Right ventricle myocardium inferior (tissue), 1 donor: ENCODE measurements at regions of chr17 and their contacts with region 1.

Region 1: DNA sequence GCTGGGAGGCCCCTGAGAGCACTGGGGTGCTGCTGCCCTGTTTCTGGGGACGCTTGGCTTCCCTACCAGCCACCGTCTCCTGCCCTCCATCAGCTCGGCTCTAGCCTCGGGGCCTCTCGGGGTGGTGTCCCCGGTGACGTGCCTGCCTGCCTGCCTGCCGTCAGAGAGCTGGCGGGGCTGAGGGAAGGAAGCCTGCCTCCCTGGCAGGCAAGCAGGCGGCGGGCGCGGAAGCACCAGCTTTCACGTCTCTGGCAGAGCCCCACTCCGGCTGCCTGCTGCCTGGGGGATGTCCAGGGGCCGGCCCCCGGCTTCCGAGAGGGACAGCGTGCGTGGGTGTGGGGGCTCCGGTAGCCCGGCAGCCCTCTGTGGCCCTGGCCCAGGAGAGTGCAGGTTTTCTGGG is 9.3 kb downstream of the CENPX start:
- DNase-seq: no peak
- ATAC-seq: peak; percentile 50

Region 2: GRCh38 chr17:81860756-81861518 is 152.4 kb before region 1 on chr17:
- intact Hi-C with region 1: no loop called
- DNase-seq: peak; percentile 99
- ATAC-seq: peak; percentile 97

Region 3: DNA sequence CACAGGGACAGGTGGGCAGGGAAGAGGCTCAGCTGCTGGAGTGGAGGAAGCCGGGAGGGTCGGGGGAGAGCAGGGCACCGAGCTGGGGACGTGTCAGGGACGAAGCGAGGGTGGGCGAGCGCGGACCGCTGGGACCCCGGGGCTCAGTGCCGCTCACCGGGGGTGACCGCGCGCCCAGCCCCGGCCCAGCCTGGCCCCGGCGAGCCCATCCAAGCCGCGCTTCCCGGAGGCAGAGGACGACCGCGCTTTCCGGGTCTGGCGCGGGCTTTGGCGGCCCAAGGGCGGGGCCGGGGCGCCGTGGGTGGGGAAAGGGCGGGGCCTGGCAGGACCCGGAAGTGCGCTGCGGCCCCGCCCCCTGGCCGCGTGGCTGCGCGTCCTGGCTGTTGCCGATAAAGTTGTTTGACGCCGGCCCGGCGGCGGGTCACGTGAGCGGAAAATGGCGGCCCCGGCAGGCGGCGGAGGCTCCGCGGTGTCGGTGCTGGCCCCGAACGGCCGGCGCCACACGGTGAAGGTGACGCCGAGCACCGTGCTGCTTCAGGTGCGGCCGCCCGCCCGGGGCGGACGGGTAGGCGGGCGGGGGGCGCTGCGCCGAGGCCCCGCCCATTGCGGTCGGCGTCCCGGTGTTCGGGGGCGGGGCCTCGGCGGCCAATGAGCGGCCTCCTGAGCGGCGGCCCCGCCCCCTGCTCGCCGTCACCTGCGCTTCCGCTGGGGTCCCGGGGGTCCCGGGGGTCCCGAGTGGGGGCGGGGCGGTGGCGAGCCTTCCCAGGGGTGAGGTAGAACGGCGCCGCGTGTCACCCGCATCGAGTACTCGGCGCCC is 35.9 kb before region 1 on chr17 and contains the start of gene ASPSCR1:
- intact Hi-C with region 1: loop called (anchors 5 kb)
- DNase-seq: peak; percentile 97
- ATAC-seq: peak; percentile 97
- total RNA-seq, gene ASPSCR1: 25.5 TPM

Region 4: DNA sequence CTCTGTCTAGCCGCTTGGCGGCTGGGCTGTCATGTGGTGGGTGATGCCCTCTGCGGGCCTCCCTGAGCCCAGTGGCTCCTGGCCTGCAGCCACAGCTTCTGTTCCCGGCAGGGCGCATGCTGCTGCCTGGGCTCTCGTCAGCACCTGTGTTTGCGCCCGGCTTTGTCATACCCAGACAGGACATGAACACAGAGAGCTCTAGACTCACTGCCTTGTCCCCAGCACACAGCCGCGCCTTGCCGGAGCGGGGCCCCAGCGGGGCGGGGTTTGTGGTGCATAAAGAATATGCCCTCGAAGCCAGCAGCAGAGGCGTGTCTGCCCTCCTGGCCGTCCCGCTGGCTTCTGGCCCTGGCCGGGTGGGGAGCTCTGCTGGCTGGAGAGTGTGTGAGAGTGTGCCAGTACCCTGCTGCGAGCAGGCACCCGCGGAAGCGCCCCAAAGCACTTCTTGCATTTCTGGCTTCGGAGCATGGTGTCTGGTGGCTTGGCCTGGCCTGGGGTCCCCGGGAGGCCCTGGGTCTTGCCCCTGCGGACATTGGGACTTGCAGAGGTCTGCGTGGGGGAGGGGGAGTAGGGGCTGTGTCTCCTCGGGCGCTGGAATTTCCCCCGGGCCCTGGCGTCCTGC is 21.5 kb before region 1 on chr17:
- intact Hi-C with region 1: loop called (anchors 2 kb)
- DNase-seq: peak; percentile 84
- ATAC-seq: peak; percentile 87

Region 5: DNA sequence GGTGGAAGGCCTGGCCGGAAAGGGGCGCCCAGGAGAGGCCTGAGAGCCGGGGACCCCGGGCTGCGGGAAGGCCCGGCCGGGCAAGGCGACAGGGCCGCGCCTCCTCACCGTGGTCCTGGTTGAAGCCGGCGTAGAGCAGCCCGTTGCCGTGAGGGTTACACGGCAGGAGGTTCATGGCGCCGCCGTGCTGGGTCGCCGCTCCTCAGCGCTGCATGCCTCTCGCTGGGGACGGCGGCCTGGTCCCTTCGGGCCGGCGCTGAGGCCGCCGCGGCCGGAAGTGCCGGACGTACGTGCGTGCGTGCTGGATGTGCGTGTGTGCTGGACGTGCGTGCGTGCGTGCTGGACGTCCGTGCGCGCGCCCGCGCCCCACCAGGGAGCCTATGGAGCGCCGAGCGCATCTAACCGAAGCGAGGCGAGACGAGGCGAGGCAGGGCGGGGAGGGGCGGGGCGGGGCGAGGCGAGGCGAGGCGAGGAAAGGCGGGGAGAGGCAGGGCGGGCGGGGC is 634.9 kb after region 1 on chr17 and contains the start of gene WDR45B:
- intact Hi-C with region 1: no loop called
- DNase-seq: peak; percentile 98
- ATAC-seq: peak; percentile 98
- total RNA-seq, gene WDR45B: 38.0 TPM